HEK293 (cell line): ENCODE measurements at regions of chr21 and their contacts with region 1.

Region 1: DNA sequence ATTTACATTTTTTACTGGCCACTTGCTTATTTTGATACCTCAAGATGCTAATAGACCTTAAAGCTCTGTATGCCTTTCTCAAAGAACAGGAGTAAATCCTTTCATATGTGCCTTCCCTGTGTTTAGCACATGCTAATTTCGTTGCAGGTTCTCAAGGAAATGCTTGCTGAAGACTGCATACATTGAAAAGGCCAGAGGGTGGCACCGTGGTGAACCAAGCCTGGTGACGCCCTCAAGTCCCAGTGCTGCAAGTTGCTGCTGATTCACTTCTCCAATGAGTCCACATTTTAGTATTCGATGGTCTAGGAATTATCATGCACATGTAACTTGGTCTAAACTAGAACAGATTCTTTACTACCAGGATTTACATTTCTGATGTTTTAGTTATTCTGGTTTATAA is 94.1 kb downstream of the CLDN17 start:
- H3K4me3 ChIP-seq: no peak overlapping the region
- H3K27ac ChIP-seq: no peak overlapping the region
- H3K4me1 ChIP-seq: no peaks in the 10 kb centered on the region
- CTCF ChIP-seq: no peak

Region 2: GRCh38 chr21:30083225-30083945 is 10.9 kb after region 1 on chr21:
- CTCF ChIA-PET with region 1: interaction called, 11 read pairs
- POLR2A ChIA-PET with region 1: no interaction called
- H3K4me3 ChIP-seq: no peak overlapping the region
- H3K27ac ChIP-seq: no peak overlapping the region
- H3K4me1 ChIP-seq: no peaks in the 10 kb centered on the region
- CTCF ChIP-seq: no peak

Region 3: GRCh38 chr21:30153697-30154340 is 81.3 kb after region 1 on chr21:
- CTCF ChIA-PET with region 1: no interaction called
- POLR2A ChIA-PET with region 1: no interaction called
- H3K4me3 ChIP-seq: no peak overlapping the region
- H3K27ac ChIP-seq: no peak overlapping the region
- H3K4me1 ChIP-seq: no peaks in the 10 kb centered on the region
- CTCF ChIP-seq: no peak